Mammary epithelial cell (primary cell): ENCODE measurements at regions of chr5 and their contacts with region 1.

Region 1: DNA sequence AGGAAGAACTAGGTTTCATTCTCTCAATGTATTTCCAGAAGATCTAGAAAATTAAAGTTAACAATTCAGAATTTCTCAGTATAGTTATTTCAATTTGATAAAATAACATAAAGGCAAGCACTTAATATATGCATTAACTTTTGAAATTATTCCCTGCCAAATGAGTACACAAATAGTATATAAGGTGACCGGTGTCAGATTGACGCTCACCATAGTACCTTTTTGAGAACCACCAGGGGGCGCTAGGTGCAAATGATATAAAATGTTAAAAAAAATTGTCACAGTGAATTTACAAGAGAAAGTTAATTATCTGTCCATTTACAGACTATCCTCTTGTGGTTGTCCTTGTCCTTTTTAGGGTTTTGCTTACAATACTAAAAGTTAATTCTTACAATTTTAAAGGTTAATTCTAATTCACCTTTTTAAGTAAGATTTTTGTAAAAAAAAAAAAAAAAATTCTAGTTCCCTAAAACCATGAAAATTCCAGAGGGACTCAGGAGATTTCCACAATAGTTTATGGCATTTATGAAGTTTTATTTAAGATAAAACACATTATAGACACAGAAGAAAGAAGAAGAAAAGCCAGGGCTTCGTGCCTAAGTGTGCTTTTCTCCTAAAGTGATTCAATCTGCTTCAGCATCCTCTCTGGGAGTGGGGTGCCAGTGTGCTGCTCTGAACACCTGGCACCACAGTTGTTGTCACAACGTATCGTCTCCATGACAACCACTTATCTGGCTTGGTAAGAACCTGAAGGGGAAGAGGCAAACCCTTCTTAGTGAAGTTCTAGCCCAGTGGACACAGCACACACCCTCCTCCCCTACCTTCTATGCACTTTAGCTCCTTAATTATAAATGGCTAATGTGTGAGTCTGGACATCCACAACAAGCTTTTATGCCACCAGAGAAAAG is 1.7 kb downstream of the ADAMTS16 start:
- DNase-seq: peak; percentile 29
- H3K4me3 ChIP-seq: no peak overlapping the region
- H3K27ac ChIP-seq: no peak overlapping the region
- H3K4me1 ChIP-seq: peaks cover 7% of the 10 kb centered on the region
- H3K27me3 ChIP-seq: peaks cover 20% of the 10 kb centered on the region
- CTCF ChIP-seq: peak; percentile 58 to 62

Region 2: DNA sequence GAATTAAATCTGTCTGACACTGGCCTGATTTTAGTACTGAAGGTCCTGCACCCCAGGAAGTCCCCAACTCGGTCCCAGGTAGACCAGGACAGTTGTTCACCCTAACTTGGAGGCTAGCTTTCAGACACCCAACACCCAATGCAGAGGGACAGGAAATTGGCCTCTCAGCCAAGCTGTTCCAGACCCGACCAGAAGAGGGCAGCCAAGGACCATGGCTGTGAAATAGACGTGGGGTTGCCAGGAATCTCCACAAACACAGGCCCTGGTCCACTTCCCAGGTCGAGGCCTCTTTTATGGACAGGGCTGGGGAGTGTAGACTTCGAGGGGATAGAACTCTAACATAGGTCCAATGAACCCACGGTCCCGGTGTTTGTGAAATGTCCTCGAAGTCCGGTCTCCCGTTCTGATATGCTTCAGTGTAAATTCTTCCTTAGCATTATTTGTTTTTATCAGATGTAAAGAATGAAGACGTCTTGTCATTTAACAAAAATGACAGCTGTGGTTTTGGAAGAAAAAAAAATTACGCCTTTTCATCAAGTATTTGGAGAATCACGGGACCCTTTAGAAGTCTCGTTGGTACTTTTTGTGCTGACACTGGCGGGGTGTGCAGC is 262.1 kb before region 1 on chr5:
- CTCF ChIA-PET with region 1: no interaction called
- dilution Hi-C with region 1: no loop called
- in situ Hi-C with region 1: no loop called
- intact Hi-C with region 1: loop called (anchors 10 kb)
- DNase-seq: peak; percentile 43
- H3K4me3 ChIP-seq: no peak overlapping the region
- H3K27ac ChIP-seq: no peak overlapping the region
- H3K4me1 ChIP-seq: no peaks in the 10 kb centered on the region
- H3K27me3 ChIP-seq: no peaks in the 10 kb centered on the region
- CTCF ChIP-seq: peak; percentile 96 to 98

Region 3: GRCh38 chr5:5340206-5340729 is 198.4 kb after region 1 on chr5:
- CTCF ChIA-PET with region 1: no interaction called
- dilution Hi-C with region 1: no loop called
- in situ Hi-C with region 1: no loop called
- intact Hi-C with region 1: loop called (anchors 5 kb)
- DNase-seq: peak; percentile 88
- H3K4me3 ChIP-seq: no peak overlapping the region
- H3K27ac ChIP-seq: no peak overlapping the region
- H3K4me1 ChIP-seq: peaks cover 31% of the 10 kb centered on the region
- H3K27me3 ChIP-seq: no peaks in the 10 kb centered on the region
- CTCF ChIP-seq: peak; percentile 75 to 80

Region 4: GRCh38 chr5:5398046-5398445 is 256.2 kb after region 1 on chr5:
- CTCF ChIA-PET with region 1: no interaction called
- dilution Hi-C with region 1: no loop called
- in situ Hi-C with region 1: no loop called
- intact Hi-C with region 1: loop called (anchors 1 kb)
- DNase-seq: no peak
- H3K4me3 ChIP-seq: no peak overlapping the region
- H3K27ac ChIP-seq: no peak overlapping the region
- H3K4me1 ChIP-seq: no peaks in the 10 kb centered on the region
- H3K27me3 ChIP-seq: no peaks in the 10 kb centered on the region
- CTCF ChIP-seq: no peak

Region 5: GRCh38 chr5:5414999-5415398 is 273.1 kb after region 1 on chr5:
- CTCF ChIA-PET with region 1: no interaction called
- dilution Hi-C with region 1: no loop called
- in situ Hi-C with region 1: loop called (anchors 5 to 10 kb)
- intact Hi-C with region 1: loop called (anchors 1 kb)
- DNase-seq: no peak
- H3K4me3 ChIP-seq: no peak overlapping the region
- H3K27ac ChIP-seq: no peak overlapping the region
- H3K4me1 ChIP-seq: peaks cover 5% of the 10 kb centered on the region
- H3K27me3 ChIP-seq: no peaks in the 10 kb centered on the region
- CTCF ChIP-seq: no peak

Region 6: GRCh38 chr5:5978501-5979376 is 836.9 kb after region 1 on chr5:
- CTCF ChIA-PET with region 1: no interaction called
- dilution Hi-C with region 1: no loop called
- in situ Hi-C with region 1: no loop called
- intact Hi-C with region 1: no loop called
- DNase-seq: no peak
- H3K4me3 ChIP-seq: no peak overlapping the region
- H3K27ac ChIP-seq: no peak overlapping the region
- H3K4me1 ChIP-seq: no peaks in the 10 kb centered on the region
- H3K27me3 ChIP-seq: no peaks in the 10 kb centered on the region
- CTCF ChIP-seq: no peak